Activated T-helper 1 cell treated with anti-CD3 and anti-CD28 coated beads, Interleukin-12 subunit alpha, Interleukin-12 subunit beta, Interleukin-2, Interleukin-4 antibody, amounts not matched to agents 30 ng/mL and 10 ng/mL and 1 ng/mL, durations not matched to agents 14 hours and 24 hours and 36 hours (primary cell): ENCODE measurements at regions of chr1 and their contacts with region 1.

Region 1: GRCh38 chr1:246971090-246971721 is 36.7 kb downstream of the ZNF695 start:
- DNase-seq: peak; percentile 4
- H3K4me3 Mint-ChIP-seq: no peak overlapping the region
- H3K27ac Mint-ChIP-seq: no peak overlapping the region
- H3K4me1 Mint-ChIP-seq: no peaks in the 10 kb centered on the region
- H3K27me3 Mint-ChIP-seq: no peaks in the 10 kb centered on the region

Region 2: GRCh38 chr1:246689409-246690008 is 281.7 kb before region 1 on chr1:
- intact Hi-C with region 1: loop called (anchors 1 kb)
- DNase-seq: peak; percentile 20
- H3K4me3 Mint-ChIP-seq: no peak overlapping the region
- H3K27ac Mint-ChIP-seq: no peak overlapping the region
- H3K4me1 Mint-ChIP-seq: no peaks in the 10 kb centered on the region
- H3K27me3 Mint-ChIP-seq: peaks cover 2% of the 10 kb centered on the region

Region 3: GRCh38 chr1:246907472-246907871 is 63.7 kb before region 1 on chr1:
- intact Hi-C with region 1: loop called (anchors 1 kb)
- DNase-seq: no peak
- H3K4me3 Mint-ChIP-seq: no peak overlapping the region
- H3K27ac Mint-ChIP-seq: no peak overlapping the region
- H3K4me1 Mint-ChIP-seq: peaks cover 18% of the 10 kb centered on the region
- H3K27me3 Mint-ChIP-seq: no peaks in the 10 kb centered on the region

Region 4: DNA sequence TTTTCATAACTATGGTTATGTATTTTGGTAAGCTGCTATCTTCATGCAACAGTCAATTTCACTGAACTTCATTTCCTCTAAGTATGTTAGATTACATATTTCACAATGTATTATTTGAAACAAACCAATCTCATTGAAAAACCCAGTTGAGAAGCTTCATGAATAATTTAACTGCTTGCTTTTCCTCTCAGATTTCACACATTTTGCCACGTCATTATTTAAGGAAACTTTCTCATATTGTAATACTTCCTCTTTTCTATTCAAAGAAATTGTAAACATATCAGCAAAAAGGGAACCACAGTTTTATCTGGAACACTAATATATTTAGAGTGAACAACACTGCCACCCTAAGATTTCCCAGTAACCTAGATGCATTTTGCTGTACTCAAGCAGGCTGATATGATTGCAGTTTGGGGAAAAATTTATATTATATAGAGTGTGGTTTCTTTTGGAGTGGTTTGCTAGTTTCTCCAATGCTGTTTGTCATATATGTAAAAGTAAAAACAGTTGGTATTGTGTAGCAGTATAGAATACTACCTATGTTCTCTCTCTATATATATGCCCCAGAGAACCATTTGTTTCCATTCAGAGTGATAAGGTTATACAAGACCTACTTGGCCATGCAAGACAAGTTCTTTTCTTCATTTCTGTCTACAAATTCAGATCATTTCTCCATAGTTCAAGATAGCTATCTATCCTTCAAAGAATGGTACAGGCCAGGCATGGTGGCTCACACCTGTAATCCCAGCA is 11.1 kb before region 1 on chr1:
- intact Hi-C with region 1: no loop called
- DNase-seq: no peak
- H3K4me3 Mint-ChIP-seq: no peak overlapping the region
- H3K27ac Mint-ChIP-seq: no peak overlapping the region
- H3K4me1 Mint-ChIP-seq: no peaks in the 10 kb centered on the region
- H3K27me3 Mint-ChIP-seq: no peaks in the 10 kb centered on the region

Region 5: GRCh38 chr1:247103859-247104591 is 132.8 kb after region 1 on chr1 and contains the start of gene ZNF669:
- intact Hi-C with region 1: no loop called
- DNase-seq: peak; percentile 86
- H3K4me3 Mint-ChIP-seq: peak within 1 kb of the TSS; percentile 91
- H3K27ac Mint-ChIP-seq: peak within 1 kb of the TSS; percentile 74
- H3K4me1 Mint-ChIP-seq: peaks cover 15% of the 10 kb centered on the region
- H3K27me3 Mint-ChIP-seq: peaks cover 14% of the 10 kb centered on the region
- total RNA-seq, gene ZNF669: 8.0 and 9.5 TPM in 2 replicates